Activated B cell treated with CpG ODN at 0.5 μM for 24 hours (primary cell): ENCODE measurements at regions of chr12 and their contacts with region 1.

Region 1: DNA sequence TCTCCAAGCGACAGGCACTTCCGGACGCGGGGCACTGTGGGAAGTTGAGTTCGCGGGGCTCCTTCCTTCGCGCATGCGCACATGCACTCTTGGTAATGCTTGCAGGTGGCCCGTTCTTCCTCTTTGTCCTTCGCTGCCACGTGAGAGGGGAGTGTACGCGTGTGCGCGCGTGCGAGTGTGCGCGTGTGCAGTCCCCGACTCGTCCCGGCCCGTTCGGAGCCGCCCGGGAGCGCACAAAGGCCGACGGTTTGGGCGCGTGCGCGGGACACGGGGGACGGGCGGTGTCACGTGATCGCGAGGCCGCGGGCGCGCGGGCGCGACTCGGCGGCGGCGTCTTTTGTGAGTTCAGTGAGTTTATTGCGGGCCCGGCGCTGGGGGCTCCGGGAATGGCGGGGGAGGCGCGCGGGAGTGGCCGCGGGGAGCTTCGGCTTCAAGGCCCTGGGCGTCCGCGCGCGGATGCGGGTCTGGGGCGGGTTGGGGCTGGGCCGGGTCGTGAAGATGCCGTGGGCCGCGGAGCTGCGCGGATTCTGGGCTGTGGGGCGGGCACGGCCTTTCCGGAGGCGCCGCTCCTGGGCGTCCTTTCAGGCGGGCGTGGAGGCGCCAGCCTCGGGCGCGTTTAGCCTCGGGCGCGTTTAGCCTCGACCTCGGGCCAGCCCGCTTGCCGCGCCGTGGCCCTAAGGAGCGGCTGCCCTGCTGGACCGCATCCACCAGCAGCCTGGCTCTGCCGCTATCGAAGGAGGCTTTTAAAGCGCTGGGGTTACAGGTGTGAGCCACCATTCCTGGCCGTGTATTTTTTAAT is at the start of gene ZNF84:
- DNase-seq: peak; percentile 92
- ATAC-seq: peak; percentile 95
- H3K4me3 Mint-ChIP-seq: peak within 1 kb of the TSS; percentile 91
- H3K27ac Mint-ChIP-seq: peak within 1 kb of the TSS; percentile 96
- H3K4me1 Mint-ChIP-seq: peaks cover 20% of the 10 kb centered on the region
- H3K27me3 Mint-ChIP-seq: peaks cover 2% of the 10 kb centered on the region
- CTCF ChIP-seq: no peak
- total RNA-seq, gene ZNF84: 34.8 and 41.1 TPM in 2 replicates

Region 2: GRCh38 chr12:132761032-132761920 is 276.1 kb before region 1 on chr12 and contains the start of gene ANKLE2:
- CTCF ChIA-PET with region 1: no interaction called
- POLR2A ChIA-PET with region 1: no interaction called
- intact Hi-C with region 1: loop called (anchors 2 kb)
- DNase-seq: peak; percentile 53
- ATAC-seq: peak; percentile 56
- H3K4me3 Mint-ChIP-seq: peak within 1 kb of the TSS; percentile 98
- H3K27ac Mint-ChIP-seq: peak within 1 kb of the TSS; percentile 96
- H3K4me1 Mint-ChIP-seq: peaks cover 60% of the 10 kb centered on the region
- H3K27me3 Mint-ChIP-seq: no peaks in the 10 kb centered on the region
- CTCF ChIP-seq: no peak
- total RNA-seq, gene ANKLE2: 117 and 136 TPM in 2 replicates

Region 3: DNA sequence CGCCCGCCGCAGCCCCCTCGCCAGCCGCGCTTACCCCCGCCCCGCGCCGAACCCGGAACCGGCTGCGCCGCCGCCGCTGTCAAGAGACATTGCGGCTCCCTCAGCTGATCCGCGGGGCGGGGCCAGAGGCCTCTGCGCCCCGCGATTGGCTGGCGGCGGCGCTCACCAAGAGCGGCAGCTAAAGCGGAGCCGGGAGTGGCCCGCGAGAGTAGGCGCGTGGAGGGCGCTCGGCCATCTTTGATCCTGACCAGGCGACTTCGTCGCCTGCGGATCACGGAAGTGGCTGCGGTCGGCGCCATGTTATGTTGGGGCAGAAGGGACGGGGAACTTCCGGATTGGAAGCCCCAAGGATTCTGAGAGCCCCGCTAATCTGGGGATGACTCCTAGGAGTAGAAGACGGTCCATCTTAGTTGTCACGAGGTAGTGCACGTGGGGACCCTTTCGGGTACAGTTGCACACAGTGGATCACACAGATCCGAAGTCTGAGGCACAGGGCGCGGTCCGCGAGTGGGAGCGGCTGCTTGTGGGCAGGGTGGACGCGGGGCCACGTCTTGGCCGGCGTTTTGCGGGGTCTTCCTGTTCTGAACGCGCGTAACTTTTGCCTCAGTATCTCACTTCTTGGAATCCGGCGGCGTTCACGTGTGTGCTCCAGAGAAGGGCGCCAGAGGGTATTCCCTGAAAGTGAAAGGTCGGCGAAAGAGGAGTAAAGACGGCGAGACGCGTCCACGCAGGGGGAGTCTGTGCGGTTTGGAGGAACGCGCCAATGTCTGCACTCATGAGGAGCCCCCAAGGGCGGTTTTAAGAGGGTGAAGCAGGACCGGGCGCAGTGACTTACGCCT is 149.7 kb before region 1 on chr12 and contains the start of gene CHFR:
- CTCF ChIA-PET with region 1: no interaction called
- POLR2A ChIA-PET with region 1: interaction called, 3 read pairs
- intact Hi-C with region 1: loop called (anchors 1 kb)
- DNase-seq: peak; percentile 90
- ATAC-seq: peak; percentile 98
- H3K4me3 Mint-ChIP-seq: peak within 1 kb of the TSS; percentile 98
- H3K27ac Mint-ChIP-seq: peak within 1 kb of the TSS; percentile 100
- H3K4me1 Mint-ChIP-seq: peaks cover 24% of the 10 kb centered on the region
- H3K27me3 Mint-ChIP-seq: peaks cover 7% of the 10 kb centered on the region
- CTCF ChIP-seq: no peak
- total RNA-seq, gene CHFR: 89.4 and 108 TPM in 2 replicates

Region 4: GRCh38 chr12:132956011-132956788 is 81.2 kb before region 1 on chr12 and contains the start of gene ZNF605:
- CTCF ChIA-PET with region 1: no interaction called
- POLR2A ChIA-PET with region 1: interaction called, 3 read pairs
- intact Hi-C with region 1: loop called (anchors 1 kb)
- DNase-seq: peak; percentile 87
- ATAC-seq: peak; percentile 89
- H3K4me3 Mint-ChIP-seq: peak within 1 kb of the TSS; percentile 96
- H3K27ac Mint-ChIP-seq: peak within 1 kb of the TSS; percentile 93
- H3K4me1 Mint-ChIP-seq: peaks cover 33% of the 10 kb centered on the region
- H3K27me3 Mint-ChIP-seq: no peaks in the 10 kb centered on the region
- CTCF ChIP-seq: no peak
- total RNA-seq, gene ZNF605: 12.2 and 15.4 TPM in 2 replicates

Region 5: DNA sequence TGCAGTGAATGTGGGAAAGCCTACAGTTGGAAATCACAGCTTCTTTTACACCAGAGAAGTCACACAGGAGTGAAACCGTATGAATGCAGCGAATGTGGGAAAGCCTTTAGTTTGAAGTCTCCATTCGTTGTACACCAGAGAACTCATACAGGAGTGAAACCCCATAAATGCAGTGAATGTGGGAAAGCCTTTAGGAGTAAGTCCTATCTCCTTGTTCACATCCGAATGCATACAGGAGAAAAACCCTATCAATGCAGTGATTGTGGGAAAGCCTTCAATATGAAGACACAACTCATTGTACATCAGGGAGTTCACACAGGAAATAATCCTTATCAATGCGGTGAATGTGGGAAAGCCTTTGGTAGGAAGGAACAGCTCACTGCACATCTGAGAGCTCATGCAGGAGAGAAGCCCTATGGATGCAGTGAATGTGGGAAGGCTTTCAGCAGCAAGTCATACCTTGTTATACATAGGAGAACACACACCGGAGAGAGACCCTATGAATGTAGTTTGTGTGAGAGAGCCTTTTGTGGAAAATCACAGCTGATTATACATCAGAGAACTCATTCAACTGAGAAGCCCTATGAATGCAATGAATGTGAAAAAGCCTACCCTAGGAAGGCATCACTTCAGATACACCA is 26.6 kb before region 1 on chr12:
- CTCF ChIA-PET with region 1: no interaction called
- POLR2A ChIA-PET with region 1: no interaction called
- intact Hi-C with region 1: no loop called
- DNase-seq: no peak
- ATAC-seq: no peak
- H3K4me3 Mint-ChIP-seq: no peak overlapping the region
- H3K27ac Mint-ChIP-seq: no peak overlapping the region
- H3K4me1 Mint-ChIP-seq: no peaks in the 10 kb centered on the region
- H3K27me3 Mint-ChIP-seq: no peaks in the 10 kb centered on the region
- CTCF ChIP-seq: no peak

Region 6: GRCh38 chr12:133130038-133130807 is 92.8 kb after region 1 on chr12 and contains the starts of genes ZNF10 and ZNF891:
- CTCF ChIA-PET with region 1: no interaction called
- POLR2A ChIA-PET with region 1: interaction called, 7 read pairs
- intact Hi-C with region 1: loop called (anchors 1 kb)
- DNase-seq: peak; percentile 99
- ATAC-seq: peak; percentile 86
- H3K4me3 Mint-ChIP-seq: peak within 1 kb of the TSS; percentile 95
- H3K27ac Mint-ChIP-seq: peak within 1 kb of the TSS; percentile 98
- H3K4me1 Mint-ChIP-seq: peaks cover 21% of the 10 kb centered on the region
- H3K27me3 Mint-ChIP-seq: no peaks in the 10 kb centered on the region
- CTCF ChIP-seq: no peak
- total RNA-seq, gene ZNF10: 8.4 and 10.9 TPM in 2 replicates
- total RNA-seq, gene ZNF891: 2.9 and 4.0 TPM in 2 replicates